ENCODE measurements at regions of chr17 and their contacts with region 1.

Region 1: DNA sequence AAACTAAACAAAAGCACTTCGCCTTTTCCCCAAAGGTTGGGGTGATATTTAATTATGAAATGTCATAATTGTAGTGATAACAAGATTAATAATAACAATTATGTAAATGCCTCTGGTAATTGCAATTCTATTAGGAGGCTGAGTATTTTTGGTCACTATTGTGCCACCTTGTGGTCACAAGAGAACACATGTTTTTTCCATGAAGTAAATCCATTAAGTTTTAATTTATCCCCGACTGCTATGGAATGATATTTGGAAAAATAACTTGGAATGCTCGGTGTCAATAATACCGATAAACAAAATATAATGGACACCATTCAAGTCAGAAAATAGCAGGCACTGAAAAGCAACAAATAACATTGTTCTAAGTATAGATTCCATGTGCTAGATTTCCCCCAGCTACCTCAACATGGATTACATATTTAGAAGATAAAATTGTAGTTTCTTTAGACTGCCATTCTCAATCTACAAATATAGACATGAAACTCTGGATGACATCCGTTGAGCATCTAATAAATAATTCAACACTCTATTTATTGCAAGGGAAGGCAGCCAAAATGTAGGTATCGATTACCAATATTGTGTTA is 25.0 kb upstream of the KCNJ2 start:
- DNase-seq: no peak
- H3K4me3 ChIP-seq: no peak overlapping the region
- H3K27ac ChIP-seq: no peak overlapping the region
- H3K4me1 ChIP-seq: no peaks in the 10 kb centered on the region
- H3K27me3 ChIP-seq: no peaks in the 10 kb centered on the region
- CTCF ChIP-seq: peak; percentile 14 to 70 (median 50)
- EP300 ChIP-seq: no peak
- POLR2A ChIP-seq: no peak

Region 2: GRCh38 chr17:69525920-69526841 is 618.2 kb before region 1 on chr17:
- intact Hi-C with region 1: loop called (anchors 5 kb)
- DNase-seq: peak; percentile 64
- H3K4me3 ChIP-seq: no peak overlapping the region
- H3K27ac ChIP-seq: no peak overlapping the region
- H3K4me1 ChIP-seq: no peaks in the 10 kb centered on the region
- H3K27me3 ChIP-seq: no peaks in the 10 kb centered on the region
- CTCF ChIP-seq: peak; percentile 69 to 82 (median 78)
- EP300 ChIP-seq: no peak
- POLR2A ChIP-seq: no peak

Region 3: DNA sequence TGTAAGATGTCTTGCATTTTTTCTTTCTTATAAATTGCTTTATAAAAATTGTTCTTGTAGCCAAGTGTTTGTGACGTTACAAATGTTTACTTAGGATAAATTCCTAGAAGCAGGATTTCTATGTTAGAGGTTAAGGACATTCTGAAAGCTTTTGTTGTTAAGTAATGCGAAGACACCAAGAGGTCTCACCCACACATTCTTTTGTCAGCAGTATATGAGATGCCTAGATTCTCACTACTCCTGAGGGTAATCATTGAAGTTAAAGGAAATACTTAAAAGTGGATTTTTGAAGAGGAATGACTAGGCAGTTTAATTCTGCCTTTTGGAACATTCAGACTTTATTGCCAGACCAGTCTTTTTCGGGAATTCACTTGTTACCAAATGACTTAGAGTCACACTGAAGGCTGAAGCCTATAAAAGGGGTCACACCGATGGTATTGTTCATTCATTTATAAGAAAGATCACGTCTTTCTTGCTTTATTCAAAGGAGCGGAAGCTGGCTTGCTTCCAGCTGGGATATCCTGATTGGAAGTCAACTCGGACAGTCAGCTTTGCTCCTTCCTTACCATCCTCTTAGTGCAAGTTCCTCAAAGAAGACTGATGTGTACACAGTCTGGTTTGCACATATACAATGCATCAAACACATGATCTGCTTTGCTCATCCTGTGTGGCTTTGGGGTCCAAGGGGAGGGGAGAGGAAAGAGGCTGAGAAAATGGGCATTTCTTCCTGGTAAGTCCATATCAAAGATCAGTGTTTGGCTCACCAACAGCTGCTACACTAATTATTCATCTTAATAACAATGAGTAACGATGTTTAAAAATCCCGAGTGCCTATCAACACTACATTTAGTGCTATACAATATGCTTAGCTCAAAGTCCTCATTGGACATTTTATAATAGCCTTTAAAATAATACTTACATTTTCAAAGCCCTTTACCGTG is 569.8 kb before region 1 on chr17:
- intact Hi-C with region 1: loop called (anchors 2 kb)
- DNase-seq: no peak
- H3K4me3 ChIP-seq: no peak overlapping the region
- H3K27ac ChIP-seq: peak overlapping the region in 2 of 4 donors; percentile 39 to 76
- H3K4me1 ChIP-seq: peaks cover 0 to 27% (median 25%) of the 10 kb centered on the region in 4 donors
- H3K27me3 ChIP-seq: no peaks in the 10 kb centered on the region
- CTCF ChIP-seq: no peak
- EP300 ChIP-seq: no peak
- POLR2A ChIP-seq: no peak

Region 4: GRCh38 chr17:69607162-69607834 is 537.1 kb before region 1 on chr17:
- intact Hi-C with region 1: loop called (anchors 5 kb)
- DNase-seq: peak; percentile 85
- H3K4me3 ChIP-seq: no peak overlapping the region
- H3K27ac ChIP-seq: peak overlapping the region in 3 of 4 donors; percentile 45 to 72 (median 71)
- H3K4me1 ChIP-seq: peaks cover 0 to 44% (median 36%) of the 10 kb centered on the region in 4 donors
- H3K27me3 ChIP-seq: no peaks in the 10 kb centered on the region
- CTCF ChIP-seq: peak; percentile 43 to 83 (median 77)
- EP300 ChIP-seq: no peak
- POLR2A ChIP-seq: no peak

Region 5: GRCh38 chr17:70208825-70209555 is 64.6 kb after region 1 on chr17:
- intact Hi-C with region 1: no loop called
- DNase-seq: no peak
- H3K4me3 ChIP-seq: no peak overlapping the region
- H3K27ac ChIP-seq: no peak overlapping the region
- H3K4me1 ChIP-seq: peaks cover 0 to 14% (median 0%) of the 10 kb centered on the region in 4 donors
- H3K27me3 ChIP-seq: no peaks in the 10 kb centered on the region
- CTCF ChIP-seq: no peak
- EP300 ChIP-seq: no peak
- POLR2A ChIP-seq: no peak

Measured in sigmoid colon (tissue), 7 donors.